CD4-positive, alpha-beta T cell (primary cell): ENCODE measurements at regions of chr1 and their contacts with region 1.

Region 1: DNA sequence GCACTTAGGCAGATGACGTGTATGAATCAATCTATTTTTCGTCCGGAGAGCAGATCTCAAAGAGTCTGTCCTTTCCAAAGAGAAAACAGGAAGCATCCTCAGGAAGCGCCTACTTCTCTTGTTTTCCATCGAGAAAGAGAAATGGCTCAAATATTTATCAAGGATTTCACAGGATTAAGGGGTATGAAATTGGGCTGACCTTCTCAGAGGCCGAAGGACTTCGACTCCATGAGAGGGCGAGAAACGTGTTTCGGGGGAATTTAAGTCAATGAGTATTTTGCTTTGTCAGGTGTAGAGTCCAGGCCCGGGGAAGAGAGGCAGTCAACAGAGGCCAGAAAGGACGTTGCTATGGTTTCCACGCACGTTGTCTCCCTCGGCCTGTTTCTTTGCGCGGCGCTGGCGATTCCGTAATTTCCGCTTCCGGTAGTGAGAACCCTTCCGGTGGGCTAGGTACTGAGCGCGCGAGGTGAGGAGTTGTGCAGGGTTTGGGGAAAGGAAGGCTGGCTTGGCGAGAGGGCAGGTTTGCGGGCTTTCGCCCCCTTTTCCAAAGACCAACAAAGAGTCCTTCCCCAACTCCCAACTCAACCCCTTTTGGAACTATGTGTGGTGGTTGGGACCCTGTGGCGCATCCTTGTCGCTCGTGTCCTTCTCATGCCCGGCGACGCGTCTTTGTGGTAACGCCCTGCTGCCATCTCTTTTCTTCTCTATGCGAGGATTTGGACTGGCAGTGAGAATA is at the start of gene MRPS21:
- DNase-seq: peak; percentile 73 to 95 (median 80)
- ATAC-seq: peak; percentile 95
- H3K4me3 ChIP-seq: peak within 1 kb of the TSS; percentile 80
- H3K4me3 Mint-ChIP-seq: peak within 1 kb of the TSS; percentile 92
- H3K27ac ChIP-seq: peak within 1 kb of the TSS; percentile 78 to 95
- H3K27ac Mint-ChIP-seq: peak within 1 kb of the TSS; percentile 96
- H3K4me1 ChIP-seq: peaks cover 19% of the 10 kb centered on the region
- H3K4me1 Mint-ChIP-seq: peaks cover 23% of the 10 kb centered on the region
- H3K27me3 ChIP-seq: no peaks in the 10 kb centered on the region
- H3K27me3 Mint-ChIP-seq: no peaks in the 10 kb centered on the region
- CTCF ChIP-seq: no peak
- total RNA-seq, gene MRPS21: 48.5 to 52.0 TPM

Region 2: GRCh38 chr1:150168960-150169601 is 124.5 kb before region 1 on chr1:
- CTCF ChIA-PET with region 1: no interaction called
- POLR2A ChIA-PET with region 1: no interaction called
- intact Hi-C with region 1: no loop called
- DNase-seq: peak in 11 of 14 experiments; percentile 33 to 75 (median 45)
- ATAC-seq: no peak
- H3K4me3 ChIP-seq: no peak overlapping the region
- H3K4me3 Mint-ChIP-seq: no peak overlapping the region
- H3K27ac ChIP-seq: no peak overlapping the region
- H3K27ac Mint-ChIP-seq: no peak overlapping the region
- H3K4me1 ChIP-seq: peaks cover 6% of the 10 kb centered on the region
- H3K4me1 Mint-ChIP-seq: no peaks in the 10 kb centered on the region
- H3K27me3 ChIP-seq: peaks cover 0 to 2% of the 10 kb centered on the region in 2 experiments
- H3K27me3 Mint-ChIP-seq: no peaks in the 10 kb centered on the region
- CTCF ChIP-seq: peak; percentile 66

Region 3: GRCh38 chr1:150321826-150322166 is 28.2 kb after region 1 on chr1:
- CTCF ChIA-PET with region 1: no interaction called
- POLR2A ChIA-PET with region 1: no interaction called
- intact Hi-C with region 1: loop called in 1 of 2 experiments (anchors 2 kb)
- DNase-seq: peak in 5 of 14 experiments; percentile 3 to 38 (median 28)
- ATAC-seq: peak; percentile 20
- H3K4me3 ChIP-seq: peak overlapping the region; percentile 78
- H3K4me3 Mint-ChIP-seq: peak overlapping the region; percentile 97
- H3K27ac ChIP-seq: peak overlapping the region; percentile 83 to 84
- H3K27ac Mint-ChIP-seq: peak overlapping the region; percentile 95
- H3K4me1 ChIP-seq: peaks cover 34% of the 10 kb centered on the region
- H3K4me1 Mint-ChIP-seq: peaks cover 39% of the 10 kb centered on the region
- H3K27me3 ChIP-seq: no peaks in the 10 kb centered on the region
- H3K27me3 Mint-ChIP-seq: no peaks in the 10 kb centered on the region
- CTCF ChIP-seq: no peak

Region 4: DNA sequence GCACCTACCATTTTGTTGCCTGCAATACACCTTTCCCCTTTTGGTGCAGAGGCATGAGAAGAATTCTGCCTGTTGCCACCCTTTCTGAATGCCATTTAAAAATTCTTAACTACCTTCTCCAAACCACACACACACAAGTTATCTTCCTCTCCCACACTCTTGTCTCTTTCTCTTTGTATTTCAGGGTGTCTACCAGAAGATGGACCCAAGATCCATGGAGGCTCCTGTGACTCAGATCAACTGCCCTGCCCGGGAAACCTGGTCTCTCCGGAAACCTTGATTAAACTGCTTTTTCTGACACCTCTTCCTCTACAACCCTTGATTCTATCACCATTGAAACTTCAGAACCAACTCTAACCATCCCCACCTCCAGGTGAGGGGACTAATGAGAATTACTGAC is 191.3 kb after region 1 on chr1:
- CTCF ChIA-PET with region 1: no interaction called
- POLR2A ChIA-PET with region 1: no interaction called
- intact Hi-C with region 1: no loop called
- DNase-seq: no peak
- ATAC-seq: no peak
- H3K4me3 ChIP-seq: no peak overlapping the region
- H3K4me3 Mint-ChIP-seq: peak overlapping the region; percentile 70
- H3K27ac ChIP-seq: no peak overlapping the region
- H3K27ac Mint-ChIP-seq: no peak overlapping the region
- H3K4me1 ChIP-seq: peaks cover 16% of the 10 kb centered on the region
- H3K4me1 Mint-ChIP-seq: peaks cover 21% of the 10 kb centered on the region
- H3K27me3 ChIP-seq: no peaks in the 10 kb centered on the region
- H3K27me3 Mint-ChIP-seq: no peaks in the 10 kb centered on the region
- CTCF ChIP-seq: no peak